Right ventricle myocardium superior (tissue), 1 donor: ENCODE measurements at regions of chr2 and their contacts with region 1.

Region 1: DNA sequence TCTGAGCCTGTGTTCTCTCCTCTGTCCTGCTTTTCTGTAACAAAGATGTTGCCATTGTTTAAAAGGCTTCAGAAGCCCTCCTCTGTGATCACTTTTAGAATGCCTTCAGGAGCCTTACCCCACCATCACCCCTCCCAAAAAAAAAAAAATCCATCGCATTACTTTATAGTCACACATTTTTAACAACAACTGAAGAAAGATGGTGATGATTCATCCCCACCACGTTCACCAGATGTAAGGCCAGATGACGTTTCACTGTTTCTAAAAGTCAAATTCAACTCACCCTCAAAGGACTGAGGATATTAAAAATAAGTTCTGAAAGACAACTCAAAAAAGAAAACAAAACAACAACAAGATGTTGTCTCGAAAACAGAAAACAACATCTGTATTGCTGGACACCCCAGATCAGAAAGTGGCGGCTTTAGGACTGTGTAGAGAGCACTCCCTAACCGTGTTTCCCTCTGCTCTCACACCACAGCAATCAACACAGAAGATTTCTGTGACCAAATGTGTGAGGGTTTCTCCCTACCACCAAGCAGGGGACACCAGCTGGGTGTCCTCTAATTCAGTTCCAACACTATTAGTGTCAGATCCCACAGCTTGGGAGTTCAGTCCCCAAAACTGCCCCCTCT is 61.9 kb upstream of the CREB1 start:
- DNase-seq: no peak
- ATAC-seq: no peak

Region 2: DNA sequence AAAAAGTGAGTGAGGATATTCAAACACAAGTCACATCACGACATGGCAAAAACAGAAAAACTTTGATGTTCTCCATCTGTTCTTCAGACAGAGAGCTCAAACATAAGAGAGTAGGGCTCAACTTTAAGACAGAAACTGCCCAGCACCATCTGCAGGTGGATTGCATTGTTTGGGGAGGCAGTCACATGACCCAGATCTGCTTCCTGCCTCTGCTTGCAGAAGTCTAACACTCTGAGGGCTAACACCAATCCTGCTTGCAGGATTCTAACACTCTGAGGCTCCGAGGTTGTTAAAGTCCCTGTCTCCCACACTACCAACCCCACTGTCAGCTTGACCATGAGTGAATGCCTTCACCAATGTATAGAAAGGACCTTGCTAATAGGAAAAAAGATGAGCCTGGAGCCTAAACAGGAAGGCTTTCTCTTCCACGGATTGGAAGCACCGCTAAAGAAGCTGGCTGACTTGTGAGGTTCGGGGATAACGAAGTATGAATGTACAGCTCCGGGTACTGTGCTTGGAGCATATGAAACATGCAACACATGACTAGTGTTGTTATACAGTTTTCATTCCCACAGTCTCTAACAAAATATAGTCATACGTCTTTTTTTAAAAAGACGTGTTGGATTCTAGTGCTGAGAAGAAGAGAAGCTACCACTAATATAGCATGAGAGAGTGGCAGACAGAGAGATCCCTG is 114.7 kb before region 1 on chr2:
- intact Hi-C with region 1: loop called (anchors 10 kb)
- DNase-seq: no peak
- ATAC-seq: peak; percentile 73